ENCODE measurements at regions of chr9 and their contacts with region 1.

Region 1: DNA sequence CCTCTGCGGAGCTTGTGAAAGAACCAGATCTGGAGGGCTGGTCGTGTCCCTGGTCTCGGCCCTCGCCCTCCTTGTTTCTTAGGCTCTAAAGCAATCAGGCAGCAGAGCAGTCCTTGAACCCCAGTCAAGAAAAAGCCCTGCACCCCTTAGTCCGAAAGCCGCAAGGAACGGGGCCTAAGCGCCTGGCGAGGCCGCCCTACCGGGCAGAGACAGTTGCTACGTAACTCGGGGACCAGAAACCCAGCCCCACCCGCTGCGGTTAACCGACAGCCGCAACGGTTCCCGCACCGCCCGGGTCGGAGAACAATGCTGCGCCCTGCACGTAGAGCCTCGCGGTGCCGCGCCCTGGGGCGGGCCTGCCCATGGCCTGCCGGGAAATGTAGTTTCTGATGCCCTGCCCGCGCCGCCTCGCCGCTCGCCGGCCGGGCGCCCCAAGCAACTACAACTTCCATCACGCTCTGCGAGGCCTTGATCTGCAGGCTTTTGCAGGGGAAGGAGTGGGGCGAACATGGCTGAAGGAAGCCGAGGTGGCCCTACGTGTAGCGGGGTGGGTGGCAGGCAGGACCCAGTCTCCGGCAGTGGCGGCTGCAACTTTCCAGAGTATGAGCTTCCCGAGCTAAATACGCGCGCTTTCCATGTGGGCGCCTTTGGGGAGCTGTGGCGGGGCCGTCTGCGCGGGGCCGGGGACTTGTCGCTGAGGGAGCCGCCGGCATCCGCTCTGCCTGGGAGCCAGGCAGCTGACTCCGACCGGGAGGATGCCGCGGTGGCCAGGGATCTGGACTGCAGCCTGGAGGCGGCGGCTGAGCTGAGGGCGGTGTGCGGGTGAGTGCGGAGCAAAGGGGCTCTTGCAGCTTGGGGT is at the start of gene SNAPC3:
- DNase-seq: peak; percentile 98
- H3K4me3 Mint-ChIP-seq: peak within 1 kb of the TSS; percentile 97
- H3K27ac Mint-ChIP-seq: peak within 1 kb of the TSS; percentile 91
- H3K4me1 Mint-ChIP-seq: peaks cover 43% of the 10 kb centered on the region
- H3K27me3 Mint-ChIP-seq: peaks cover 5% of the 10 kb centered on the region
- total RNA-seq, gene SNAPC3: 31.7 and 35.9 TPM in 2 replicates

Region 2: DNA sequence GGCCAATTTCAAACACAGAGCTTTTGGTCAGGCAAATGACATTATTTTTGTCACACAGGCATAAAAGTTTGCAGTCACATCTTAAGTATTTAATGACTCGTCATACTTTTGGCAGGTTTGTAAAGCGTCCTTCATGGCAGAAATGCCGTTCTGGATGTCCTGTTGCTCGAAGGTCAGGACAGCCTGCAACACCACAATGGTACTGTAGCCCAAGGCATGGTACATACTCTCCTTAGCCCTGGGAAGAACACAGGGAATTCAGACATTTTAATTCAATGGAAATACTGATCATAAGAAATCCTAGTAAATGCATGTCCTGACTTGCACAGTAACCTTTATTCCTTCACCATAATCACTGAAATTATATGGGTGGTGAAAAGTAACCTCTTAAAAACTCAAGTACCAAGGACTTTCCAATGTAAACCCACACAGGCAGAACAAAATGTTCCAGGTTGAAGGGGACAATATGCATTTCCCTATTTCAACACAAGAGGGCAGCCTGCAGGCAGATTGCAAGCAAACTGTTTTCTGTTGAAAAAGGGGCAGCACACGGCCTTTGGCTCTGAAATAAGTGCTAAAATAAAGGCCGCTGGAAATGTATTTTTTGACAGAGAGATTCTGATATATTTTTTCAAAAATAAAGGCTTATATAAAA is 211.3 kb before region 1 on chr9:
- intact Hi-C with region 1: loop called (anchors 1 kb)
- DNase-seq: peak; percentile 90
- H3K4me3 Mint-ChIP-seq: no peak overlapping the region
- H3K27ac Mint-ChIP-seq: peak overlapping the region; percentile 20
- H3K4me1 Mint-ChIP-seq: peaks cover 19% of the 10 kb centered on the region
- H3K27me3 Mint-ChIP-seq: no peaks in the 10 kb centered on the region

Region 3: GRCh38 chr9:15277400-15278090 is 145.1 kb before region 1 on chr9:
- intact Hi-C with region 1: loop called (anchors 1 kb)
- DNase-seq: no peak
- H3K4me3 Mint-ChIP-seq: no peak overlapping the region
- H3K27ac Mint-ChIP-seq: no peak overlapping the region
- H3K4me1 Mint-ChIP-seq: peaks cover 24% of the 10 kb centered on the region
- H3K27me3 Mint-ChIP-seq: no peaks in the 10 kb centered on the region

Region 4: DNA sequence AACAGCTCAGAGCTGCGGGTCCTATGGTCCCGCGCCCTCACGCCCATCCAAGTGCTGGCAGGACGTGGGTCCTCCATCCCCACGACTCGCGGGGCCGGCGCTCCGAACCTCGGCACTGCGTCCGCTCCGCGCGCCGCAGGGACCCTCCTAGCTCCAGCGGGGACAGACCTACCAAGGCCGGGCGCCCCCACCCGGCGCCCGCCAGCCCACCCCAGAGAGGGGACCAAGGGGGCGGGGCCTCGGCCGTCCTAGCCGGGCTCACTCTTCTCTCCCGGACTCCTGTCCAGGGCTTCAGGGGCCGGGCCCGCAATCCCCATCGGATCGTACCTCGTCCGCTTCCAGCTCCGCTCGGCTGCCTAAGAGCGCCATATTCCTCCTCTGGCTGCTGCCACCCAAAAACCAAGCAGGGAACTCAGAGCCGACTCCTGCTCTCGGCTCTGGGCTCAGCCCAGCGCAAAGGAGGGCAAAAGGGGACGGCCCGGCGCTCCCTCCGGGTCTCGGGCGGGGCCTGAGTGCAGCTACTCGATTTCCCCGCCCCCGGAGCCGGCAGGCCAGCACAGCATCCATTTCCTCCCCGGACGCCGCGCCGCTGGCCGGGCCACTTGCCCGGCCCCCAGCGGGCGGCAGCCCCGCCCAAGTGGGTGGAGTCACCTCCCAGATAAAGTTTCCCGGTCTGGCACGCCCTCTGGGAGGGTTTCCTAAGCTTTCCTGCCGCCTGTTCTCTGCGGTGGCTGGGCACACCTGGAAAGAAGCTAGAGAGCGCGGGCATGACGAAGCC is 115.7 kb before region 1 on chr9 and contains the start of gene TTC39B:
- intact Hi-C with region 1: loop called (anchors 1 kb)
- DNase-seq: peak; percentile 96
- H3K4me3 Mint-ChIP-seq: peak within 1 kb of the TSS; percentile 99
- H3K27ac Mint-ChIP-seq: peak within 1 kb of the TSS; percentile 97
- H3K4me1 Mint-ChIP-seq: peaks cover 51% of the 10 kb centered on the region
- H3K27me3 Mint-ChIP-seq: no peaks in the 10 kb centered on the region
- total RNA-seq, gene TTC39B: 20.3 and 22.2 TPM in 2 replicates

Region 5: GRCh38 chr9:15485836-15486666 is 63.5 kb after region 1 on chr9:
- intact Hi-C with region 1: loop called (anchors 5 kb)
- DNase-seq: no peak
- H3K4me3 Mint-ChIP-seq: no peak overlapping the region
- H3K27ac Mint-ChIP-seq: peak overlapping the region; percentile 38
- H3K4me1 Mint-ChIP-seq: peaks cover 22% of the 10 kb centered on the region
- H3K27me3 Mint-ChIP-seq: no peaks in the 10 kb centered on the region

Region 6: GRCh38 chr9:15552636-15553527 is 130.3 kb after region 1 on chr9 and contains the start of gene CCDC171:
- intact Hi-C with region 1: loop called (anchors 2 kb)
- DNase-seq: peak; percentile 96
- H3K4me3 Mint-ChIP-seq: peak within 1 kb of the TSS; percentile 89
- H3K27ac Mint-ChIP-seq: peak within 1 kb of the TSS; percentile 81
- H3K4me1 Mint-ChIP-seq: peaks cover 13% of the 10 kb centered on the region
- H3K27me3 Mint-ChIP-seq: peaks cover 17% of the 10 kb centered on the region
- total RNA-seq, gene CCDC171: 1.5 and 1.6 TPM in 2 replicates